Common myeloid progenitor, CD34-positive (primary cell): ENCODE measurements at regions of chr1 and their contacts with region 1.

Region 1: DNA sequence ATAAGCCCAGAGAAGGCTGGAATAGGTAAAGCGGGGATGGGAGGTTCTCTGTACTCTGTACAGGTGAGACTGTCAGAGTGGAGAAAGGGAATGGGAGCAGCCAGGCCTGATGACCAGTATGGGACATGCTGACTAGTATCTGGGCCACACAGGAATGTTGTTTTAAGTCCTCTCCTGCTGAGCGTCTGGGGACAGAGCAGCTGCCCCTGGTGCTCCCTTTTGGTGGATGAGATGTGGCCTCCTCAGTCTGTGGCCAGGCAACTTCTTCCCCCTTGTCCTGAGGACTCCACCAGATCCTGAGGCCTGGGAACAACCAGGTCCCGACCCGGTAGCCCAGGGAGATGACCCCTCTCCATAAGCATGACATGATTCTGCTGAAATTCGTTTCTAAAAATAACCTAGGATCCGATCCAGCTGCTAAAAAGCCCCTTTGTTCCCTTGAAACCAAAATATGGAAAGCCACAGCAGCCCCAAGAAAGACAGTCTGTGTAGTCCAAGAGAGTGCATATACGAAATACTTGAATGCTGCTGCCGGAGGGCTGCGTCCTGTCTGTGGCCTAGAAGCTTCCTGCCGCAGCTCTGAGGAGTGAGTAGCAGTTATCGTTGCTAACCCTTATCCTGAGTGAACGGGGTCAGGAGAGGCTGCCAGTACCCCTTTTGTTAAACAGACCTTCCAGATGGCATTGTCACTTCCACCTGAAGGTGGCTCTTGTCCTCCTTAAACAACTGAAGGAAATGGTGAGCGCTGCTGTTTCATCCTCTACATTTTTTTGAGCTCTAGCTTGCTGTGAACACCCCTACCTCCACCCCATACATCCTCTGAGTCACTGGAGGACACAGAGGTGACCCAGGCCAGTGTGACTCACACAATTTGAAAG is 47.2 kb downstream of the ATP2B4 start:
- DNase-seq: peak; percentile 99 to 100 (median 100)
- H3K4me3 ChIP-seq: peak overlapping the region in 5 of 7 experiments; percentile 24 to 64 (median 39)
- H3K27ac ChIP-seq: peak overlapping the region; percentile 77 to 93
- H3K4me1 ChIP-seq: peaks cover 16 to 78% (median 59%) of the 10 kb centered on the region in 4 experiments
- H3K27me3 ChIP-seq: no peaks in the 10 kb centered on the region

Region 2: GRCh38 chr1:203649999-203650855 is 23.6 kb before region 1 on chr1:
- CTCF ChIA-PET with region 1: interaction called, 33 read pairs
- POLR2A ChIA-PET with region 1: interaction called, 5 read pairs
- DNase-seq: peak; percentile 50 to 93 (median 88)
- H3K4me3 ChIP-seq: peak overlapping the region in 3 of 7 experiments; percentile 34 to 49 (median 41)
- H3K27ac ChIP-seq: no peak overlapping the region
- H3K4me1 ChIP-seq: peaks cover 6 to 54% (median 42%) of the 10 kb centered on the region in 4 experiments
- H3K27me3 ChIP-seq: no peaks in the 10 kb centered on the region

Region 3: GRCh38 chr1:203663294-203663693 is 10.5 kb before region 1 on chr1:
- CTCF ChIA-PET with region 1: interaction called, 40 read pairs
- POLR2A ChIA-PET with region 1: interaction called, 3 read pairs
- DNase-seq: peak in 2 of 3 donors; percentile 50 to 62
- H3K4me3 ChIP-seq: no peak overlapping the region
- H3K27ac ChIP-seq: no peak overlapping the region
- H3K4me1 ChIP-seq: peaks cover 0 to 45% (median 25%) of the 10 kb centered on the region in 4 experiments
- H3K27me3 ChIP-seq: no peaks in the 10 kb centered on the region

Region 4: GRCh38 chr1:203692565-203693470 is 19.0 kb after region 1 on chr1:
- CTCF ChIA-PET with region 1: interaction called, 40 read pairs
- POLR2A ChIA-PET with region 1: interaction called, 4 read pairs
- DNase-seq: no peak
- H3K4me3 ChIP-seq: no peak overlapping the region
- H3K27ac ChIP-seq: peak overlapping the region in 1 of 2 experiments; percentile 55
- H3K4me1 ChIP-seq: peaks cover 0 to 27% (median 2%) of the 10 kb centered on the region in 4 experiments
- H3K27me3 ChIP-seq: no peaks in the 10 kb centered on the region